GM12878 (cell line): ENCODE measurements at regions of chr14 and their contacts with region 1.

Region 1: GRCh38 chr14:99604283-99604765 is 317 bp upstream of the CCDC85C start:
- DNase-seq: peak; percentile 32
- ATAC-seq: peak; percentile 93
- H3K4me3 ChIP-seq: peak overlapping the region; percentile 83
- H3K27ac ChIP-seq: no peak overlapping the region
- H3K4me1 ChIP-seq: peaks cover 11% of the 10 kb centered on the region; the same call in 1 of the 2 replicates
- H3K27me3 ChIP-seq: no peaks in the 10 kb centered on the region; a peak in 1 of 4 replicates
- CTCF ChIP-seq: no peak
- EP300 ChIP-seq: no peak
- POLR2A ChIP-seq: no peak
- RAD21 ChIP-seq: no peak

Region 2: DNA sequence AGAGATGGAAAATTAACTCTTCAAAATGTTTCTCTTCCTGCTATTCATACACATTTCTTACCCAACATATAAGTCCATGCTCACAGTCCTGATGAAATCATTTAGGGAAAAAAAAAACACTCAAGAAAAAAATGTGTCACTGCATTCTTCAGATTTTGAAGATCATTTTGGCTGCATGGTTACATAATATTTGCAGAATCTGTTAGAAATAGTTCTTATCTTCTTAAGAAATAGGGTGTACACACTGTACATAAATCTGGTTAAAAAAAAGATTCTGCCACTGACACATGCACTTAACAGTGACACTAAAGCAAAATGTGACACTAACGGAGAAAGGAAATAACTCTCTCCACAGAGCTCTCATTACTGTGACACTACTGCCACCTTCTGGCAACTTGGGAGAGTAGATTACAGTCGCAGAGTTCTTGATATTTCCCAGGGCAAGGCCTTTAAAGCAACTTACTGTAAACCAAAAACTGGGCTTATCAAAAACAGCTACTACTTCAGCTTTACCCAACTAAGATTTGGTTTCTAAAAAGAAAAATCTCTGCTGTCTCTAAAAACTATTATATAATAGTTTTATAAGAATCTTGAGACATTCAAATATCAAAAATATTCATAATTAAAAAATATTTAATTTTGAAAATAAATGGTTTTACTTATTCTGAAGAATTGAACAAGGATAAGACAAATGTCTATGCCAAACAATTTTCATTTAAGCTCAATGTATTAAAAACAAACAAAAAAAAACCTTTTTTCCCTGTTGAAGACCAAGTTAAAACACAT is 188.6 kb before region 1 on chr14:
- CTCF ChIA-PET with region 1: no interaction called
- POLR2A ChIA-PET with region 1: no interaction called
- RAD21 ChIA-PET with region 1: no interaction called
- SMC1A ChIA-PET with region 1: no interaction called
- in situ Hi-C with region 1: no loop called
- intact Hi-C with region 1: no loop called
- DNase-seq: peak; percentile 55
- ATAC-seq: peak; percentile 97
- H3K4me3 ChIP-seq: no peak overlapping the region
- H3K27ac ChIP-seq: no peak overlapping the region
- H3K4me1 ChIP-seq: peaks cover 5% of the 10 kb centered on the region; the same call in 1 of the 2 replicates
- H3K27me3 ChIP-seq: no peaks in the 10 kb centered on the region
- CTCF ChIP-seq: peak; percentile 75 to 86 (median 79)
- EP300 ChIP-seq: no peak
- POLR2A ChIP-seq: no peak
- RAD21 ChIP-seq: peak; percentile 91

Region 3: DNA sequence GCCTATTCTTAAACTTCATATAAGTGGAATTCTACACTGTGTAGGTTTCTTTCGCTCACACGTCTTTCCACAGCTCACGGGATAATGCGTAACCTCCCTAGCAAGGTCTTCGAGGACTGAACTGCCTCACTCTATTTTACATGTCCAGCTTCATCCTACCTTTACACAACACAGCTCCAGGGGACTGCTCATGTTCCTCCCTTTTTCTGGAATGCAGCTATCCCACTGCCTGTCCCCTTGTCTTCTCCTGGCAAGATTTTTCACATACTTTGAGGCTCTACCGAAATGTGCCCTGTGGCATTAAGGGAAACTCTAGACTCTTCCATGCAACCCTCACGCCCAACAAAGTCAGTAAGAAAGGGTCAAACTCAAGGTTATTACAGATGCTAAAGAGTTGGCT is 134.4 kb before region 1 on chr14:
- CTCF ChIA-PET with region 1: no interaction called
- POLR2A ChIA-PET with region 1: no interaction called
- RAD21 ChIA-PET with region 1: no interaction called
- SMC1A ChIA-PET with region 1: no interaction called
- in situ Hi-C with region 1: no loop called
- intact Hi-C with region 1: no loop called
- DNase-seq: no peak
- ATAC-seq: no peak
- H3K4me3 ChIP-seq: no peak overlapping the region
- H3K27ac ChIP-seq: no peak overlapping the region
- H3K4me1 ChIP-seq: no peaks in the 10 kb centered on the region
- H3K27me3 ChIP-seq: no peaks in the 10 kb centered on the region
- CTCF ChIP-seq: no peak
- EP300 ChIP-seq: no peak
- POLR2A ChIP-seq: no peak
- RAD21 ChIP-seq: no peak

Region 4: DNA sequence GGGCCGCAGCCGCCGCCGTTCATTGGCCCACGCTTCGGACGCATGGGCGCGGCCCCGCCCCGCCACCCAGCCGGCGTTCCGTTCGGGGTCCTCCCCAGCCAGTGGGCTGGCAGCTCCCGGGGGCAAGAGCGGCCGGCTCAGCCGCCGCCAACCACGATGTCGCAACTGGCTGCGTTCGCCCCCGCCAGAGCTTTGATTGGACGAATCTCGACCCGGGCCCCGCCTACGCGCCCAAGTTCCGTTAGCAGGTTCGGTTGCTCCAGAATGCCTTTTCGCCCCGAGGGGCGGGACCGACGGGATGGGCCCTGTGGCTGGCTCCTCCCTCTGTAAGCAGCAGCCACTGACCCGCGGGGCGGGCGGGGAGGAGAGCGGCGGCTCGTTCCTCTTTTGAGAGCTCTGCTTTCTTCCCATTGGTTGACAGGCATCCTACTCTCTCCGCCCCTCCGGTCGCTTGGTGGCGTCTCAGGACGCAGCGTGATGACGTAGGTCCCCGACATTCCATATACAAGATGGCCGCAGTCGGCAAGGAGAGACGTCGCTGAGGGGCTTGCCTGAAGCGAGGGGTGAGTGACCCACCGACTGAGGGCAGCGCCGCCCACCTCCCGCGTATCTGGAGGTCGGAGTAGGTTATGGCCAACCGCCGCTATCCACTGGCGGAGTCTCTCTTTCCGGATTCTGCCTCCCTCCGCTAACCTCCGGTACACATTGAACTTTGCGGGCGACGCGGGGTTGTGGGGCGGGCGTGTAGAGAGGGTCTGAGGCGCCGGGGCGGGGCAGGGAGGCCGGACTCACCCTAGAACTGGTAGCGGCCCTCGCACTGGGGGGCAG is 123.2 kb before region 1 on chr14 and contains the start of gene CCNK:
- CTCF ChIA-PET with region 1: interaction called, 3 read pairs
- POLR2A ChIA-PET with region 1: interaction called, 10 read pairs
- RAD21 ChIA-PET with region 1: interaction called, 10 read pairs
- SMC1A ChIA-PET with region 1: no interaction called
- in situ Hi-C with region 1: no loop called
- intact Hi-C with region 1: loop called (anchors 2 kb)
- DNase-seq: peak; percentile 97
- ATAC-seq: peak; percentile 93
- H3K4me3 ChIP-seq: peak within 1 kb of the TSS; percentile 87
- H3K27ac ChIP-seq: peak within 1 kb of the TSS; percentile 90
- H3K4me1 ChIP-seq: peaks cover 8% of the 10 kb centered on the region
- H3K27me3 ChIP-seq: no peaks in the 10 kb centered on the region
- CTCF ChIP-seq: no peak
- EP300 ChIP-seq: peak in 1 of 2 experiments; percentile 30; a peak in 1 of 4 replicates
- POLR2A ChIP-seq: peak; percentile 98
- RAD21 ChIP-seq: no peak
- polyA plus RNA-seq, gene CCNK: 15.5 to 21.2 TPM

Region 5: DNA sequence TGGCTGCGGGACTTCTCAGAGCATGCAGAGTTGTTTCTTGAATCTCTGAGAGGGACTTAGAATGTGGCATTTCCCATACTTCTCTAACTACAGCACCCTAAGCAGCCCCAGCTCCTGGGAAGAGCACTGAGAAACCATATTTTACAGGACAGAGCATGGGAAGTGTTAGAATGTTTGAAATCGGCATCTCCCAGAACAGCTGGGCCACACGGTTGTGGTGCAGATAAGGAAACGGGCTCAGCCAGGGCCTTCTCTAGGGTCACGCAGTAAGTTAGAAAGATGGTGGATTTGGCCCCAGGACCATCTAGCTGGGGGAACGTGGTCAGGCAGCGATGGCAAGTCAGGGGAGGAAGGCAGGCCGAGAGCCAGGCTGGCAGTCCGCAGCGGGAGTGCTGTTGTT is 30.1 kb after region 1 on chr14:
- CTCF ChIA-PET with region 1: no interaction called
- POLR2A ChIA-PET with region 1: no interaction called
- RAD21 ChIA-PET with region 1: no interaction called
- SMC1A ChIA-PET with region 1: no interaction called
- in situ Hi-C with region 1: no loop called
- intact Hi-C with region 1: no loop called
- DNase-seq: no peak
- ATAC-seq: no peak
- H3K4me3 ChIP-seq: no peak overlapping the region
- H3K27ac ChIP-seq: no peak overlapping the region
- H3K4me1 ChIP-seq: no peaks in the 10 kb centered on the region
- H3K27me3 ChIP-seq: peaks cover 0 to 1% of the 10 kb centered on the region in 2 experiments; a peak in 2 of 4 replicates
- CTCF ChIP-seq: no peak
- EP300 ChIP-seq: no peak
- POLR2A ChIP-seq: no peak
- RAD21 ChIP-seq: no peak